Naive thymus-derived CD4-positive, alpha-beta T cell (primary cell): ENCODE measurements at regions of chr5 and their contacts with region 1.

Region 1: DNA sequence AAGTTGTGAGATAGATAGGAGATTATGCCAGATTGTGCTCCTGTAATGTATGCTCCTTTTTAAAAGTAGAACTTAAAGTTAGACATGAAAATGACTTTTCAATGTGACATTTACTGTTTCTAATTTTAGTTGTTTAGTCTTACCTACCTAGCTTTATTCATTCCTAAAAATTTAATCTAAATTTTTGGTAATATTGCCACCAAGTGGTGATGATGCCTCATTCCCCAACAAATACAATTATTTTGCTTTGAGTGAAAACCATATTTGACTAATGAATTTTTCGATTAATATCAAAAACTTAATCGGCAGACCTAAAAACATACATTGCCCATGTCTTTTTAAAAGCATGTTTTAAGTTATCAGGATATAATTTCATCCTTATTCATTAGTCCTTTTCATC is 25.6 kb downstream of the PPWD1 start:
- DNase-seq: peak in 1 of 9 donors; percentile 5
- ATAC-seq: no peak
- H3K4me3 ChIP-seq: no peak overlapping the region
- H3K4me3 Mint-ChIP-seq: no peak overlapping the region
- H3K27ac ChIP-seq: no peak overlapping the region
- H3K27ac Mint-ChIP-seq: no peak overlapping the region
- H3K4me1 ChIP-seq: no peaks in the 10 kb centered on the region
- H3K4me1 Mint-ChIP-seq: peaks cover 0 to 6% (median 0%) of the 10 kb centered on the region in 7 donors
- H3K27me3 ChIP-seq: no peaks in the 10 kb centered on the region
- H3K27me3 Mint-ChIP-seq: no peaks in the 10 kb centered on the region

Region 2: GRCh38 chr5:65570598-65571226 is 18.0 kb before region 1 on chr5:
- CTCF ChIA-PET with region 1: no interaction called
- POLR2A ChIA-PET with region 1: no interaction called
- intact Hi-C with region 1: loop called (anchors 2 kb)
- DNase-seq: no peak
- ATAC-seq: no peak
- H3K4me3 ChIP-seq: no peak overlapping the region
- H3K4me3 Mint-ChIP-seq: no peak overlapping the region
- H3K27ac ChIP-seq: no peak overlapping the region
- H3K27ac Mint-ChIP-seq: no peak overlapping the region
- H3K4me1 ChIP-seq: peaks cover 0 to 6% of the 10 kb centered on the region in 2 donors
- H3K4me1 Mint-ChIP-seq: peaks cover 21 to 78% (median 63%) of the 10 kb centered on the region in 7 donors
- H3K27me3 ChIP-seq: no peaks in the 10 kb centered on the region
- H3K27me3 Mint-ChIP-seq: no peaks in the 10 kb centered on the region

Region 3: DNA sequence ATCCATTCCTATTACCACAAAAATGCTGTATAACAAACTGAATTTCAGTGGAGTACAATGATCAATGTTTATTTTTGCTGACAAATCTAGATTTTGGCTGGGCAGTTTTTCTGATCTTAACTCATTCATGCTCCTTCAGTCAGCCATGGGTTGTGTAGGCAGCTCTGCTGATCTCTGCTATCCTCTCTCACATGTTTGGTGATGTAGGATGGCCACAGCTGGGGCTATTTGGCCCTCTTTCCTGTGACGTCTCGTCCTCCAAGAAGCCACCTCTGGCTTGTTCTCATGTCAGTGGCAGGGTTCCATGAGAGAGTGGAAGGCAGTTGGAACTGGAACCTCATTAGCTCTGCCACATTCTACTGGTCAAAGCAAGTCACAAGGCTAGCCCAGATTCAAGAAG is 142.2 kb after region 1 on chr5:
- CTCF ChIA-PET with region 1: no interaction called
- POLR2A ChIA-PET with region 1: no interaction called
- intact Hi-C with region 1: no loop called
- DNase-seq: no peak
- ATAC-seq: no peak
- H3K4me3 ChIP-seq: no peak overlapping the region
- H3K4me3 Mint-ChIP-seq: no peak overlapping the region
- H3K27ac ChIP-seq: no peak overlapping the region
- H3K27ac Mint-ChIP-seq: peak overlapping the region in 1 of 9 donors; percentile 62
- H3K4me1 ChIP-seq: no peaks in the 10 kb centered on the region
- H3K4me1 Mint-ChIP-seq: peaks cover 7 to 15% (median 11%) of the 10 kb centered on the region in 7 donors
- H3K27me3 ChIP-seq: no peaks in the 10 kb centered on the region
- H3K27me3 Mint-ChIP-seq: no peaks in the 10 kb centered on the region